AG04450 (cell line): ENCODE measurements at regions of chr3 and their contacts with region 1.

Region 1: GRCh38 chr3:42118762-42119361 is 27.7 kb downstream of the TRAK1 start:
- DNase-seq: no peak
- H3K4me3 ChIP-seq: no peak overlapping the region
- H3K27ac ChIP-seq: no peak overlapping the region
- H3K27me3 ChIP-seq: no peaks in the 10 kb centered on the region
- CTCF ChIP-seq: peak; percentile 44

Region 2: GRCh38 chr3:42071904-42072592 is 46.8 kb before region 1 on chr3:
- CTCF ChIA-PET with region 1: no interaction called
- POLR2A ChIA-PET with region 1: no interaction called
- DNase-seq: no peak
- H3K4me3 ChIP-seq: peak overlapping the region; percentile 43
- H3K27ac ChIP-seq: peak overlapping the region; percentile 82
- H3K27me3 ChIP-seq: no peaks in the 10 kb centered on the region
- CTCF ChIP-seq: no peak

Region 3: DNA sequence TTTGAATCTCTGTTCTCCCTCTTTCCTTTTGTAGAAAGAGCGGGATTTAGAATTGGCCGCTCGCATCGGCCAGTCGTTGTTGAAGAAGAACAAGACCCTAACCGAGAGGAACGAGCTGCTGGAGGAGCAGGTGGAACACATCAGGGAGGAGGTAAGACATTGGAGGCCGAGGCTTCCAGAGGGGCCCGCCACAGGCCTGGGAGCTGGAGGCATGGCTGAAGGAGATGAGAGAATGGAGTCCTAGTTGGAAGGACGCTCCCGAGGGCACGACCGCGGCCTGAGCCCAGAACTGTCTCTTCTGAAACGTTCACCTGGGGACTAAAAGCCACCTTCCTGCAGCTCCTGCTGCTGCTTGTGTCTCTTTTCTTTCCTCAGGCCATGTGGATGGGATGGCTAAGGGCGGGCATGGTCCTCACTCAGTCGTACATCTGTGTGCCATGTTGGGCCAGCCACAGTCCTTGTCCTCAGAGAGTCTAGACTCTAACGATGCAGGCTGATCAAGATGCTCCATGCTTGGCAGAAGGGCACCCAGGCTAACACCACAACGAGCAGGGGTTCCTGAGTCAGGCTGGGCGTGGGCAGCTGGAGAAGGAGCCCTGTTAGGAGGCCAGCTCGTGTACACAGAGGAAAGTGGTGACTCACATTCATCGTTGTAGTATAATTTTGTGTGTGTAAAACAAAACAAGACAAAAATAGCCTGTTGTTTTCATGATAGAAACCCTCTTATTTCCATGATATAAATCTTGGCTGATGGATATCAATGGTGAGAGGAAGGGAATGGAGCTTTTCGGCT is 66.0 kb after region 1 on chr3:
- CTCF ChIA-PET with region 1: interaction called, 77 read pairs
- POLR2A ChIA-PET with region 1: no interaction called
- DNase-seq: peak; percentile 15
- H3K4me3 ChIP-seq: no peak overlapping the region
- H3K27ac ChIP-seq: no peak overlapping the region
- H3K27me3 ChIP-seq: no peaks in the 10 kb centered on the region
- CTCF ChIP-seq: no peak

Region 4: DNA sequence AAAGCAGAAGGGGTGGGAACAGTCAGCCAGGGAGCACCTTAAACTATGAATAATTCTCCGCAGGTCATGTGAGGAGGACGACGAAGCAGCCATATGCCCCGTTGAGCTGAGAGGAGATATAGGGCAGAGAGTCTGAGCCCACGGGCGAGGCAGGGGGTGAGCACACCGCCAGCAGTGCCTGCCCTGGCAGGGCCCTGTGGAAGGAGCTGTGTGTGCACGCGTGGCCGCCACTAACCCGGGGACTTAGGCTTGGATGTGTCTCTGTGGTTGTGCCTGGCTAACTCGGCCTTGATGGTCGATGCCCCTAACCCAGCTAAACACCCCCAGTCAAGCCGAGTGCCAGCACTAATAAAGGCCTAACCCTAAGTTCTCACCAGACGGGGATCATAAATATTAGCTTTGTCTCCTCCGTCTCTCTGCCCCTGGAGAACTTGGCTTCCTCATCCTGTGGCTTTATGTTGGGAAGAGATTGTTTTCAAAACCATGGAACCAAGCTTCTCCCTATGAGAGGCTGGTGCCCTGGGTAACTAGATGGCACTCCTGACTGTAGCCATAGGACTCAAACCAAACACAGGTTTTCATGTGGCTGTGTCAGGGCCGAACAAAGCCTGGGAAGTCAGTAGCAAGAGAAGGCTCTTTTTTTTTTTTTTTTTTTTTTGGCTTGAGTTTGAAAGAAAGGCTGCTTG is 101.7 kb after region 1 on chr3:
- CTCF ChIA-PET with region 1: no interaction called
- POLR2A ChIA-PET with region 1: no interaction called
- DNase-seq: no peak
- H3K4me3 ChIP-seq: no peak overlapping the region
- H3K27ac ChIP-seq: no peak overlapping the region
- H3K27me3 ChIP-seq: no peaks in the 10 kb centered on the region
- CTCF ChIP-seq: no peak